A673 (cell line): ENCODE measurements at regions of chr13 and their contacts with region 1.

Region 1: GRCh38 chr13:72808917-72809500 is 27.1 kb downstream of the PIBF1 start:
- DNase-seq: peak; percentile 42
- H3K4me3 ChIP-seq: no peak overlapping the region
- H3K27ac ChIP-seq: no peak overlapping the region
- H3K4me1 ChIP-seq: no peaks in the 10 kb centered on the region
- H3K27me3 ChIP-seq: no peaks in the 10 kb centered on the region
- CTCF ChIP-seq: peak; percentile 73

Region 2: DNA sequence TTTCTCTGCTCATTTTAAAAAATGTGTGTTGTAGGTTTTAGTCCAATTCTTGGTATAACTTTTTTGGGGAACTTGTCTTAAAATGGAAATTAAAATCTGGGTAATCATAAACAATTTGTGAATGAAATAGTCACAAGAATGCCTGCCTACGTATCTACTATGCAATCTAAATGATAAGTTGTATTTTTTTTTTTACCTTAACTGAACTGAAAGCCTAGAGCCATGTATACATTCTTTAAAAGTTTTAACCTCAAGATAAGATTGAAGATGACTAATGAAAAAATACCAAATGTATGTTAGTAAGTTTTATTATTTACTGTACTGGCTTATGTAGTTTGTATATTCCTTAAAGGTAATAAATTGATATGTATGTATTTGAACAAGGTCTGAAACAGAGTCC is 17.4 kb after region 1 on chr13:
- CTCF ChIA-PET with region 1: interaction called, 10 read pairs
- POLR2A ChIA-PET with region 1: no interaction called
- intact Hi-C with region 1: no loop called
- DNase-seq: no peak
- H3K4me3 ChIP-seq: no peak overlapping the region
- H3K27ac ChIP-seq: no peak overlapping the region
- H3K4me1 ChIP-seq: no peaks in the 10 kb centered on the region
- H3K27me3 ChIP-seq: no peaks in the 10 kb centered on the region
- CTCF ChIP-seq: no peak

Region 3: DNA sequence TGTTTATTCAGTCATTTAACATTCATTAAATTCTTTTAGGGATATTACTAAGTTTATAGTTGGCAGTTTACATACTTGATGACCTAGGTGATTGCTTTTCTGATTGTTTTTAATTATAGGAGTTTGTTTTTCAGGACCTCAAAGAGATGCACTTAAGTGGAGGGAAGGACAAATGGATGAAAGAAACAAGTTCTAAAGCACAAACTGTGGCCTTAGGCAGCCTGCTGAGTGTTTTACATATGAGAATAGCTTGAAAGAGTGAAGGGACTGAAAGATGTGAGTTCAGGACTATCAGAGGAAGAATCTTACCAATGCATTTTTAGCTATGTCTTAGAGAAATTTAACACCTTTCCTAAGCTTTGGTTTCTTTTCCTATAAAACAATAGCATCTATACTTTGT is 922.6 kb after region 1 on chr13:
- CTCF ChIA-PET with region 1: interaction called, 13 read pairs
- POLR2A ChIA-PET with region 1: no interaction called
- intact Hi-C with region 1: no loop called
- DNase-seq: no peak
- H3K4me3 ChIP-seq: no peak overlapping the region
- H3K27ac ChIP-seq: no peak overlapping the region
- H3K4me1 ChIP-seq: no peaks in the 10 kb centered on the region
- H3K27me3 ChIP-seq: no peaks in the 10 kb centered on the region
- CTCF ChIP-seq: no peak